Tibial artery (tissue), 4 donors: ENCODE measurements at regions of chr1 and their contacts with region 1.

Region 1: GRCh38 chr1:151693076-151693651 is 23.4 kb downstream of the CELF3 start:
- DNase-seq: no peak
- H3K4me3 ChIP-seq: no peak overlapping the region
- H3K27ac ChIP-seq: no peak overlapping the region
- H3K4me1 ChIP-seq: no peaks in the 10 kb centered on the region
- H3K27me3 ChIP-seq: no peaks in the 10 kb centered on the region
- CTCF ChIP-seq: peak; percentile 19 to 28

Region 2: DNA sequence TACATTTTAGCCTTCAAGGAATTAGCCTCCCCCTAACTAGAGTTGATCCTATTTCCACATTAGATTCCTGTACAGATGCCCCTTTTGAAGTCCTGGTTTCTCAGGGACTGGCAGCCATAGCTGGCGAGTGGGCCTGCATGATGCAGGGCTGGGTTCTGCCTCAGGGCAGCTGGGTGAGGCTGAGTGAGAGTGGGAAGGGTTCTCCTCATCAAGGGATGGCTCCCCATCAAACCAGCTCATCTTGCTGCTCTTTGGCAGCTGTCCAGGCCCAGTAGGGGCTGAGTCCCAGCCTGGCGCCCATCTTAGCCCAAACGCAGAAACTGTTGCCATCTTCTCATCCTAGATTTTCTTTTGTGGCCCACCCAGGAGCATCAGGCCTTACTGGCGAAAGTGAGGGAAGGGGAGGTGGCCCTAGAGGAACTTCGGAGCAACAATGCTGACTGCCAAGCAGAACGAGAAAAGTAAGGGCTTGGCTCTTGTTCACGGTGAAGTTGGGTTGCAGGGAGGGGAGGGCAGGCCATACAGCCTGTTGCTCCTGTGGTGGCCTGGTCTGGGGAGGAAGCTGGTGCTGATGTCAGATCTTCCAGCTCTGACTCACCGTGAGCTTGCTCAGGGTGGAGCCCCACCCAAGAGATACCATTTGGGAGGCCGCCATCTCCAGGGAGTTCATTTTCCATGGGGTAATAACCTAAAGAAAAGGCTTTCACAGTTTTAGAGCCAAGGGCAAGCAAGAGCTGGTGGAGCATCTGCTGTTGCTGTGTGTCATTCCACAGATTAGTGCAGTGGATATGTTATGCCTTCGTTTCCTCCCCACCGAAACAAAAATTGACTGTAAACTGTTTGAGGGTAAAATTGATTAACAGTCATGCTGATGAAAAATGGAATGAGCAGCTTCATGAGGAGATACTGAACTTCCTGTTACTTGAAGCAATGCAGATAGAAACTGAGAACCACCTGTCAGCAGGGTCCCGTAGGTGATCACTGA is 118.3 kb before region 1 on chr1:
- intact Hi-C with region 1: no loop called
- DNase-seq: no peak
- H3K4me3 ChIP-seq: no peak overlapping the region
- H3K27ac ChIP-seq: no peak overlapping the region
- H3K4me1 ChIP-seq: peaks cover 0 to under 1% (median 0%) of the 10 kb centered on the region in 4 donors
- H3K27me3 ChIP-seq: no peaks in the 10 kb centered on the region
- CTCF ChIP-seq: no peak

Region 3: DNA sequence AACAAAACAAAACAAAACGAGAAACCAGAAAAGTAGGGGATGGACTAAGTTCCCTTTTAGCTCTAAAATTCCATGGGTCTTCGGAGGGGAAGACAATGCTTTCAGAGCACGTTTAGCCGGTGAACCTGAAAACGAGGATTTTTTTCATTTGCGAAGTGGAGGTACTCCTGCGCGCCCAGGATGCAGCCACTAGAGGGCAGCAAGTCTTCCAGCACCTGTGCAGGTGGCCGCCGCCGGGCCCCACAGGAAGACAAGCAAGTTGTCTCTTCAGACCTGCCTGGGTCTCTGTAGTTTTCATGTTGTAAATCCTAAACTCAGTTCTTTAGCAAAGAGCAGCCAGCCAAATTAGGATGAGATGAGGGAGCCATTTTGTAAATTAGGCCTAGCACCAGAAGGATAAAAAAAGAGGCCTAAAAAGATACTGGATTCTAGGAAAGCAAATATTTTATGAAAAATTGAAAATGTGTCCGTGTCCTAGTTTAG is 99.0 kb before region 1 on chr1:
- intact Hi-C with region 1: no loop called
- DNase-seq: peak; percentile 59 to 83
- H3K4me3 ChIP-seq: no peak overlapping the region
- H3K27ac ChIP-seq: no peak overlapping the region
- H3K4me1 ChIP-seq: peaks cover 0 to 7% (median 0%) of the 10 kb centered on the region in 4 donors
- H3K27me3 ChIP-seq: no peaks in the 10 kb centered on the region
- CTCF ChIP-seq: peak; percentile 82 to 84

Region 4: DNA sequence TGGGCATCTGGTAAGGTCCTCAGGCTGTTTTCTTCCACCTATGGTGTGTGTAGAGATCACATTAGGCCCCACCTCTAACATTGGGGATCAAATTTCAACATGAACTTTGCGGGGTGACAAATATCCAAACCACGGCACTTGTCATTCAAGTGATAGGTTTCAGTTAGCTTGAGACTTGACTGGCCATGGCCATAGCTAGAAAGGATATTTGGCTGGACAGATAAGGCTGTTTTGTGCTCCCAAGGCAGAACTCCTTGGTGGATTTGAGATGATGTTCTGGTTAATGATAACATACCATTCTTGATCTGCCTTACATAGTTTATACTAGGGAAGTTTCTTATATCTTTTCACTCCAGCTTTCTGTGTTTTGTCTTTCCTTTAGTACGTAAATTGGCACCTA is 25.1 kb before region 1 on chr1:
- intact Hi-C with region 1: loop called (anchors 1 kb)
- DNase-seq: no peak
- H3K4me3 ChIP-seq: no peak overlapping the region
- H3K27ac ChIP-seq: no peak overlapping the region
- H3K4me1 ChIP-seq: no peaks in the 10 kb centered on the region
- H3K27me3 ChIP-seq: no peaks in the 10 kb centered on the region
- CTCF ChIP-seq: no peak